A673 (cell line): ENCODE measurements at regions of chr11 and their contacts with region 1.

Region 1: GRCh38 chr11:47248664-47249377 is at the start of gene ACP2:
- DNase-seq: peak; percentile 99
- H3K4me3 ChIP-seq: peak within 1 kb of the TSS; percentile 69
- H3K27ac ChIP-seq: peak within 1 kb of the TSS; percentile 96
- H3K4me1 ChIP-seq: peaks cover 13% of the 10 kb centered on the region
- H3K27me3 ChIP-seq: no peaks in the 10 kb centered on the region
- CTCF ChIP-seq: peak; percentile 68
- total RNA-seq, gene ACP2: 63.3 and 68.1 TPM in 2 replicates

Region 2: DNA sequence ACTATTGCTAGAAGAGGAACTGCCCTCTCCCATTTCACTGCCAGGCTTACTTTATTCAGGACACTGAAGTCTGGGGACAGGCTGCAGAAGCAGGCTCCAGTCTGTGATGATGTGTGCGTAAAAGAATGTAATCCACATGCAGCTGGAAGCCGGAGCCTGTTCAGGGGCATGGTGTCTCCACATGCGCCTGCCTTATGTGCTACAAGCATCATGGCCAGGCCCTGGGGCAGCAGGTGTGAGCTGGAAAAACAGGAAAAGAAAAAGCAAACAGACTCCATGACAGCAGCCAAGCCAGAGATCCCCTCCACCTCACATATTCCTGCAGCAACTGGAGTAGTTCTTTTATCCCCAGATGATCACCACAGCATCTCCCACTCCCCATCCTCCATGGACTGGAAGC is 105.5 kb before region 1 on chr11:
- CTCF ChIA-PET with region 1: no interaction called
- POLR2A ChIA-PET with region 1: no interaction called
- intact Hi-C with region 1: no loop called
- DNase-seq: no peak
- H3K4me3 ChIP-seq: no peak overlapping the region
- H3K27ac ChIP-seq: no peak overlapping the region
- H3K4me1 ChIP-seq: no peaks in the 10 kb centered on the region
- H3K27me3 ChIP-seq: no peaks in the 10 kb centered on the region
- CTCF ChIP-seq: no peak

Region 3: DNA sequence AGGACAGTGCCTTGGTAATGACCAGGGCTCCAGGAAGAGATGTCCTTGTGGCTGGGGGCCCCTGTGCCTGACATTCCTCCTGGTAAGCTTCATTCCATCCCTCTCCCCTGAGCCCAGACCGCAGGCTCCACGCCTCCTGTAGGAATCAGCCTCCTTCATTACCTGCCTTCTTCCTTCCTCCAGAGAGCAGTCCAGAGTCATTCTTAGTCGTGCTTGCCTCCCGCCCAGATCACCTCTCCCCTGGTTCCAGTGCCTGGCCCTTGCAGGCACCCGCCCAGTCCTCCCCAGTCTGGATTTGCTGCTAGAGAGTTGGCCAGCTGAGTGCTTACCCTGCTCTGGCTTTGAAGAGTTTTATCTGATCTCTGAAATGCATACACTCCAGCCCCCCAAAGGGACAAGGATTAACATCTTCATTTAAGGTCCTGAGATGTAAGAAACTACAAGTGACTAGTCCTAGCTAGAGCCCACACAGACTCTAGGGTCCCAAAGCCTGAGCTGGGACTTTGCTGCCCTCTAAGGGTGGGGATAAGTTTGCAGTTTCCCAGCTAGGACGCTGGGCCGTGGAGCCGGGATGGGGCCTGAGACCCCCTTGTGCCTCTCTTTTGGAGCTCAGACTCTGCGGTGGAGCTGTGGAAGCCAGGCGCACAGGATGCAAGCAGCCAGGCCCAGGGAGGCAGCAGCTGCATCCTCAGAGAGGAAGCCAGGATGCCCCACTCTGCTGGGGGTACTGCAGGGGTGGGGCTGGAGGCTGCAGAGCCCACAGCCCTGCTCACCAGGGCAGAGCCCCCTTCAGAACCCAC is 10.6 kb after region 1 on chr11:
- CTCF ChIA-PET with region 1: interaction called, 9 read pairs
- POLR2A ChIA-PET with region 1: no interaction called
- intact Hi-C with region 1: loop called (anchors 1 kb)
- DNase-seq: peak; percentile 79
- H3K4me3 ChIP-seq: no peak overlapping the region
- H3K27ac ChIP-seq: no peak overlapping the region
- H3K4me1 ChIP-seq: peaks cover 23% of the 10 kb centered on the region
- H3K27me3 ChIP-seq: no peaks in the 10 kb centered on the region
- CTCF ChIP-seq: peak; percentile 87